Posterior vena cava (tissue), 2 donors: ENCODE measurements at regions of chr12 and their contacts with region 1.

Region 1: GRCh38 chr12:119911182-119911581 is 34.1 kb upstream of the CIT start:
- DNase-seq: no peak

Region 2: DNA sequence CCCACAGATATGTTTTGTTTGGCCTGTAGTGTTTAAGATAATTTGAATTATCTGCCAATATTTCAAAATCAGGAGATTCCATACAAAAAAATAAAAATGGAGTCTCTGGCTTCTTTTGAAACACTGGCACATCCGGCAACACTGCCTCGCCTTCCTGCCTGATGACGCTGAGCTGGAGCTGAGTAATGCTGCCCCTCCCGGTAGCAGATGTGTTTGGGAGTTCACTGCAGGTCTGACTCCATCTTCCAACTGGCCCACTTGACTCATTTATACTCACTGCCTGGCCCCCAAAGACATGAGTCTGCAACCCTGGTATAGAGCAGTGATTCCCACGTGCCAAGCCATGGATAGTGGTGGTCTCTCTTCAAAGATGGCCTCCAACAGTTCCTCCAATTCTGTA is 41.5 kb before region 1 on chr12:
- intact Hi-C with region 1: loop called in 1 of 2 experiments (anchors 1 kb)
- DNase-seq: no peak

Region 3: GRCh38 chr12:119949145-119949544 is 38.0 kb after region 1 on chr12:
- intact Hi-C with region 1: no loop called
- DNase-seq: no peak